Tibial artery (tissue), 4 donors: ENCODE measurements at regions of chr15 and their contacts with region 1.

Region 1: GRCh38 chr15:83559310-83559966 is 94.5 kb upstream of the ADAMTSL3 start:
- DNase-seq: peak in 1 of 2 donors; percentile 41
- H3K4me3 ChIP-seq: no peak overlapping the region
- H3K27ac ChIP-seq: no peak overlapping the region
- H3K4me1 ChIP-seq: no peaks in the 10 kb centered on the region
- H3K27me3 ChIP-seq: no peaks in the 10 kb centered on the region
- CTCF ChIP-seq: peak; percentile 73 to 75

Region 2: GRCh38 chr15:83436458-83437158 is 122.8 kb before region 1 on chr15:
- intact Hi-C with region 1: loop called (anchors 2 kb)
- DNase-seq: no peak
- H3K4me3 ChIP-seq: no peak overlapping the region
- H3K27ac ChIP-seq: no peak overlapping the region
- H3K4me1 ChIP-seq: no peaks in the 10 kb centered on the region
- H3K27me3 ChIP-seq: peaks cover 0 to 32% of the 10 kb centered on the region in 2 donors
- CTCF ChIP-seq: no peak

Region 3: GRCh38 chr15:83445643-83446042 is 113.8 kb before region 1 on chr15:
- intact Hi-C with region 1: loop called (anchors 2 kb)
- DNase-seq: no peak
- H3K4me3 ChIP-seq: no peak overlapping the region
- H3K27ac ChIP-seq: no peak overlapping the region
- H3K4me1 ChIP-seq: peaks cover 0 to 19% (median 9%) of the 10 kb centered on the region in 4 donors
- H3K27me3 ChIP-seq: peaks cover 0 to 17% of the 10 kb centered on the region in 2 donors
- CTCF ChIP-seq: no peak

Region 4: DNA sequence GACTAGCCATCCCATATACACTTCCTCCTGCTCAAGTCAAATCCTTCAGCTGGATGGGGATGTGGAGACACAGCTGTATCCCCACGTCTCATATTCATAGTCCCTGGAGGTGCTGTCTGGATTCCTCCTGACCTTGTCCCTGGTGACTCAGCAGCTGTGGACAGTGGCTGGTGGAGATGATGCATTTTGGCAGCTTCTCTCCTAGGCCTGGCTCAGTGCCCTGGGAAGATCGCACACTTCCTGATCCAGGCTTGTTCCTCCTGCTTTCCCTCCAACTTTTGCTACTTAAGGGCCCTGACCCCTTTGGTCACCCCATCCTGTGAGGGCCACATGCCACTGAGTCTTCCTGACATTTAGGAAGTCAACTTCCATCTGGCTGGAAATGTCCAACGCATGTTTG is 138.9 kb after region 1 on chr15:
- intact Hi-C with region 1: no loop called
- DNase-seq: peak; percentile 47 to 74
- H3K4me3 ChIP-seq: no peak overlapping the region
- H3K27ac ChIP-seq: no peak overlapping the region
- H3K4me1 ChIP-seq: peaks cover 0 to 52% (median 19%) of the 10 kb centered on the region in 4 donors
- H3K27me3 ChIP-seq: no peaks in the 10 kb centered on the region
- CTCF ChIP-seq: no peak

Region 5: GRCh38 chr15:83845230-83845629 is 285.8 kb after region 1 on chr15:
- intact Hi-C with region 1: no loop called
- DNase-seq: no peak
- H3K4me3 ChIP-seq: no peak overlapping the region
- H3K27ac ChIP-seq: no peak overlapping the region
- H3K4me1 ChIP-seq: peaks cover 0 to 41% (median 13%) of the 10 kb centered on the region in 4 donors
- H3K27me3 ChIP-seq: no peaks in the 10 kb centered on the region
- CTCF ChIP-seq: no peak